ENCODE measurements at regions of chr20 and their contacts with region 1.

Region 1: GRCh38 chr20:31869942-31870725 is at the starts of genes DUSP15 and TTLL9:
- DNase-seq: no peak
- H3K4me3 ChIP-seq: peak within 1 kb of the TSS; percentile 27
- CTCF ChIP-seq: no peak

Region 2: DNA sequence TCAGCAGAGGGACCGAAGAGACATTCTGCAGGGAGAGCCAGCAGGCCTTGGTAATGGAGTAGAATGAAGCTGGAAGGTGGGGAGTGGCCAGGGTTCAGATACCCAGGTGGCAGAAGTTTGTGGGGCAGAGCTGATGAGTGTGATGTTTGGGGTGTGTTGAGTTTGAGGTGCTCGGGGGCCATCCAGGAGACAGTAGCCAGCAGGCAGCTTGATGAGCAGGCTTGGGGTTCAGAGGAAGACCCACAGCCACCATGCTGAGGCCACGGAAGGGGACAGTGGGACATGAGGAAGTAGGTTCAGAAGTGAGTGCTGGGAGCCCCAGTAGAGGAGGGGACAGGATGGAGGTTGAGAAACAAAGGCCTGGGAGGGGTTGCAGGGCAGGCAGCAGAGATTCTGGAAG is 13.6 kb before region 1 on chr20:
- CTCF ChIA-PET with region 1: interaction called, 86 read pairs
- POLR2A ChIA-PET with region 1: no interaction called
- DNase-seq: no peak
- H3K4me3 ChIP-seq: no peak overlapping the region
- CTCF ChIP-seq: no peak

Region 3: DNA sequence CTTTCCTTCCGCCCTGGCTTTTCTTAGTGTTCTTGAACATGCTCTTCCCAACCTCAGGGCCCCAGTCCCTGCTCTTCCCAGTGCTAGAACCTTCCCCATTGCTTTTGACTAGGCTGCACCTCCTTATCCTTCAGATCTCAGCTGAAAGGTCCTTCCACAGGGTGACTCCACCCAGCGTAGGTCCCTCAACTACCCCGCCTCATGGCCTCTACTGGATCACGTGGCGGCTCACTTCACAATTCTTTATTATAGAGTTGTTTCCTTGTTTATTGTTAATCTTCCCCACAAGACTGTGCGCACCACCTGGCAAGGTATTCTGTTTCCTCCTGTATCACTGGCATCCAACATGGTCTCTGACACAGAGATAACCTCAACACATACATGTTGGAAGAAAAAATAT is 31.5 kb after region 1 on chr20:
- CTCF ChIA-PET with region 1: no interaction called
- POLR2A ChIA-PET with region 1: no interaction called
- DNase-seq: no peak
- H3K4me3 ChIP-seq: no peak overlapping the region
- CTCF ChIP-seq: no peak